Right cardiac atrium (tissue), 5 donors: ENCODE measurements at regions of chr5 and their contacts with region 1.

Region 1: GRCh38 chr5:139765409-139766217 is 30.0 kb upstream of the PSD2 start:
- DNase-seq: peak; percentile 75 to 93 (median 92)
- ATAC-seq: peak; percentile 82 to 83
- H3K4me3 ChIP-seq: peak overlapping the region; percentile 35
- H3K27ac ChIP-seq: no peak overlapping the region
- H3K4me1 ChIP-seq: peaks cover 5% of the 10 kb centered on the region
- H3K27me3 ChIP-seq: no peaks in the 10 kb centered on the region

Region 2: DNA sequence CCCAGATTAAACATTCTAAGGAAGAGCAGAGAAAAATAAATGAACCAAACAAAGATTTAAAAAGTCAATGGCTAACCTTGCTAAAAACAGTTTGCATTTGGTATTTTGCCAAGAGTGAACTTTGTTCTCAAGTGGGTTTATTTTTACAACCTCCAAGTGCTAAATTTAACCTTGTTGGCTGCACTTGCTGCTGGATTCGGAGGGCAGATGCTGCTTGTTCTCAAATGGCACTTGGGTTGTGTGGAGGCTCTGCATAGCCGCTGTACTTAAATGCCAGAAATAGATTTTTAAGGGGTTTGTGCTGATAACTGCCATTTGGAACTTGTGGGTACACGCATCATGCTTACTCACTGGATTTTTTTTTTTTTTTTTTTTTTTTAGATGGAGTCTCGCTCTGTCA is 348.4 kb before region 1 on chr5:
- intact Hi-C with region 1: loop called in 1 of 4 experiments (anchors 10 kb)
- DNase-seq: peak in 2 of 3 donors; percentile 44 to 69
- ATAC-seq: peak; percentile 63 to 66
- H3K4me3 ChIP-seq: no peak overlapping the region
- H3K27ac ChIP-seq: no peak overlapping the region
- H3K4me1 ChIP-seq: peaks cover 12% of the 10 kb centered on the region
- H3K27me3 ChIP-seq: no peaks in the 10 kb centered on the region

Region 3: DNA sequence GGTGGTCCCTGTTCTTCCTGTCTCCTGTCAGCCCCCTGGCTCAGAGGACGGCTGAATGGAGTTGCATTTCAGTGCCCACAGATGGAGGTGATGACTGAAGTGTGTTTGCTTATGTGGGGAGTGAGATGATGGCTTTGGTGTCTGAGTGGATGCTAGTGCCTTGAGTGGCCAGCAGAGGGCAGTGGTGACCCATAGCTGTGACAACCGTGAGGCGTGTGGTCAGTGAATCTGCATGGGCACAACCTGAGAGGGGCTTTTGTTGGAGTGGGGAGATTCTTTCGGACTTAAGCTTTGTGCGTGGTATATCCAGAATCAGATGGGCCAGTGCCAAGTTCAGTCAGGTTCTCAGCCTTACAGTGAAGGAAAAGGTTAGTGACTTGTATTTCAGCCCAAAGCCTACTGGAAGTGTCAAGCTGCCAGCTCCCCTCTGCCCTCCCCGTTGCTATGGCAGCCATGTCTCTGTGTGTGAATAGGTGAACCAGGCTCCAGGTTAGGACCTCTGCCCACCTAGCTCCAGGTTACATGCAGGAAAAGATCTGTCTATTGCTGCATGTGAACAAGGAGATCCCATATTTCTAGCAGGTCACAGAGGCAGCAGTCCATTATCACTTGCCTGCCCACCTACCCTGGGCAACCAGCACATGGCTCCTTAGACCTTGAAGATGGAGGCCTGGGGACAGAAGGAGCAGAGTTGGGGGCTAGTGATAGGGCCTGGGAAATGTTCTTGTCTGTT is 132.2 kb before region 1 on chr5:
- intact Hi-C with region 1: loop called (anchors 2 to 5 kb)
- DNase-seq: peak; percentile 67 to 83 (median 79)
- ATAC-seq: peak; percentile 15 to 29
- H3K4me3 ChIP-seq: no peak overlapping the region
- H3K27ac ChIP-seq: no peak overlapping the region
- H3K4me1 ChIP-seq: peaks cover 14% of the 10 kb centered on the region
- H3K27me3 ChIP-seq: no peaks in the 10 kb centered on the region

Region 4: DNA sequence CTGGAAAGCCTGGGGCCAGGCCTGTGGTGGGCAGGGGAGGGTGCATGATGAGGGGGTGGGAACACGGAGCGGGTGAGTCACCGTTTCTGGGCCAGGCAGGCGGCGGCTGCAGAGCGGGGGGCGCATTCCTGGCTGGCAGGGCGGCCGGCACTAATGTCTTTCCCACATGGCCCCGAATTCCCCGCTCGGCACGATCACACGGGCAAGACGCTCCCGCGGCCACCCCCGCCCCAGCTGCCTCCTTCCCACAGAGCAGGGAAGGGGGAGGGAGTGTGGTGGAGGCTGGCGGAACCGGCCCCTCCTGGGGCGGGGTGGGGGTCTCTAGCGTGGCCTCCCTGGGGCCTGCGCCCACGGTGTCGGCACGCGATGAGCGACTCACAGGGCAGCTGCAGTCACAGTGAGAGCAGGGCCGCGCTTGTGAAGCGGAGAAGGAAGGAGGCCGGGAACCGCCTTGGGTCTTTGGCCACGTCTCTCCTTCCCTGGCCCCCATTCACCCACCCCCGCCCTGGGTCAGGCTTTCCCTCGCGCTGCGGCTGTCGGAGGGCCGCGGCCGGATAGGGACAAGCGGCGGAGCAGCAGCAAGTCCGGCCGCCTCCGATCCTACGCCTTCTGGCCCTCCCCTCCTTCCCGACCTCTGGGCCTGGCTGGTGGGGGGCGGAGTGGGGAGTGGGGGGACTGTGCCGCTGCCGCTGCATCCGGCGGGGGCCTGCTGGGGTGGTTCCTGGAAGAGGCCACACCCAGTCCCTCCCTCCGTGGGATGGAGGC is 68.5 kb before region 1 on chr5:
- intact Hi-C with region 1: loop called in 2 of 4 experiments (anchors 5 to 10 kb)
- DNase-seq: peak; percentile 92 to 96 (median 95)
- ATAC-seq: peak; percentile 88 to 89
- H3K4me3 ChIP-seq: peak overlapping the region; percentile 7
- H3K27ac ChIP-seq: peak overlapping the region; percentile 62
- H3K4me1 ChIP-seq: peaks cover 18% of the 10 kb centered on the region
- H3K27me3 ChIP-seq: no peaks in the 10 kb centered on the region